ENCODE measurements at regions of chr1 and their contacts with region 1.

Region 1: GRCh38 chr1:205791568-205792180 is 16.4 kb upstream of the RAB29 start:
- DNase-seq: peak; percentile 77
- CTCF ChIP-seq: peak; percentile 75

Region 2: DNA sequence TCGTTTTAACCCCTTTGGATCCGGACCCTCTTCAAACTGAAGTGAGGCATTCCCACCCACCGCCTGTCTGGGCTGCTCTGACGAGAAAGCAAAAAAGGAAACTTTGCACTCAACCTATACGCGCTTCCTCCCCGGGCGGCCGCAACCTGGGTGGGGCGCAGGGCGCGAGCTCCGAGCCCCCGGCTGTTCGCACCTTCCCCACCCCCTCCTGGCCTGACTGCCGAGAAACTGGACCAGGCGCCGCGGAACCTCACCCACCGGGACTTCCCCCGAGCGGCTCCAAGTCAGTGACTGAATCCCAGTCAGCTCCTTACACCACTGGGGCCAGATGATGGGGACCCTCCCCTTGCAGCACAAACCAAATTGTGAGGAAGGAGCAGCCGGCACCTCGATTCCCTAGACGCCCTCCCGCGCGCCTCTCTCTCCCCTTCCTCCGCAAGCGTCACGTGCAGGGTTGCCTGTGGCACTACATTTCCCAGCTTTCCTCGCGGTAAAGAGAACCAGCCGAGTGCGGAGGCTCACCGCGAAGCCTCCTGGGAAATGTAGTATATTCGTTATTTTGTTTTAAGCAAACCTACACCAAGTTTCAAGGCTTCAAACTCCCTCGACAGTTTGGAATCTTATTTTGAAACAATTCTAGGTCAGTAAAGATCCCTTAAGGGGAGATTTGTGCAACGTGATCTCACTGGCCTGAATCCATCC is 16.5 kb before region 1 on chr1 and contains the start of gene RAB29:
- CTCF ChIA-PET with region 1: interaction called, 36 read pairs
- POLR2A ChIA-PET with region 1: no interaction called
- DNase-seq: peak; percentile 83
- CTCF ChIP-seq: no peak

Region 3: GRCh38 chr1:205805082-205805712 is 13.5 kb after region 1 on chr1:
- CTCF ChIA-PET with region 1: interaction called, 19 read pairs
- POLR2A ChIA-PET with region 1: no interaction called
- DNase-seq: no peak
- CTCF ChIP-seq: no peak

Region 4: DNA sequence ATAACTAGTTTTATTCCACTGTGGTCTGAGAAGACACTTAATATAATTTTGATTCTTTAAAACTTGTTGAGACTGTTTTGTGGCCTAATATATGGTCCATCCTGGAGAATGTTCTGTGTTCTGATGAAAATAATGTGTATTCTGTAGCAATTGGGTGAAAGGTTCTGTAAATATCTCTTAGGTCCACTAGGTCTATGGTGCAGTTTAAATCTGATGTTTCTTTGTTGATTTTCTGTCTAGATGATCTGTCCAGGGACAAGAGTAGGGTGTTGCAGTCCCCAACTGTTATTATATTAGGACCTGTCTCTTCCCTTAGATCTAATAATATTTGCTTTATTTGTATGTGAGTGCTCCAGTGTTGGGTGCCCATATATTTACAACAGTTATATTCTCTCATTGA is 92.1 kb after region 1 on chr1:
- CTCF ChIA-PET with region 1: no interaction called
- POLR2A ChIA-PET with region 1: no interaction called
- DNase-seq: no peak
- CTCF ChIP-seq: no peak

Region 5: GRCh38 chr1:205907794-205908193 is 116.1 kb after region 1 on chr1:
- CTCF ChIA-PET with region 1: interaction called, 17 read pairs
- POLR2A ChIA-PET with region 1: no interaction called
- DNase-seq: no peak
- CTCF ChIP-seq: no peak

Region 6: GRCh38 chr1:205919026-205919746 is 127.5 kb after region 1 on chr1:
- CTCF ChIA-PET with region 1: interaction called, 30 read pairs
- POLR2A ChIA-PET with region 1: no interaction called
- DNase-seq: peak; percentile 78
- CTCF ChIP-seq: peak; percentile 94

Region 7: DNA sequence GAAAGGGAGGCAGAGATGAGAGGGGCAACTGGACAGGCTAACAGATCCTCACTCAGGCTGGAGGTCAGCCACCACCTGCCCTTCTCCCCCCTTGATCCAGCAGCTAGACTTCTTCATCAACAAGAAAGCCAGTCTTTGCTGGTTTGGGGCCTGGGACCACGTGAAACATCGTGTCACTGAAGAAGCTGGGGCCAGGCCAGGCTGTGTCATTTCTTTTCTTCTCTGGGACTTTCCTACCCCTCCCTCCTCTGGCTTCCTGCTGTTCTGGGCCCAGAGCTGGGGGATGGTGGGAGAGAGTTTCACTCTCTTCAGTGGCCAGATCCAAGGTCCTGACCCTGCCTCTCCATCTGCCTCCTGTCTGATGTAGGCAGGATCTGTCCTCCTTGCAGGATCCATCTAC is 169.7 kb after region 1 on chr1:
- CTCF ChIA-PET with region 1: interaction called, 10 read pairs
- POLR2A ChIA-PET with region 1: no interaction called
- DNase-seq: peak; percentile 57
- CTCF ChIP-seq: no peak

Measured in GM10248 (cell line).